ENCODE measurements at regions of chr14 and their contacts with region 1.

Region 1: DNA sequence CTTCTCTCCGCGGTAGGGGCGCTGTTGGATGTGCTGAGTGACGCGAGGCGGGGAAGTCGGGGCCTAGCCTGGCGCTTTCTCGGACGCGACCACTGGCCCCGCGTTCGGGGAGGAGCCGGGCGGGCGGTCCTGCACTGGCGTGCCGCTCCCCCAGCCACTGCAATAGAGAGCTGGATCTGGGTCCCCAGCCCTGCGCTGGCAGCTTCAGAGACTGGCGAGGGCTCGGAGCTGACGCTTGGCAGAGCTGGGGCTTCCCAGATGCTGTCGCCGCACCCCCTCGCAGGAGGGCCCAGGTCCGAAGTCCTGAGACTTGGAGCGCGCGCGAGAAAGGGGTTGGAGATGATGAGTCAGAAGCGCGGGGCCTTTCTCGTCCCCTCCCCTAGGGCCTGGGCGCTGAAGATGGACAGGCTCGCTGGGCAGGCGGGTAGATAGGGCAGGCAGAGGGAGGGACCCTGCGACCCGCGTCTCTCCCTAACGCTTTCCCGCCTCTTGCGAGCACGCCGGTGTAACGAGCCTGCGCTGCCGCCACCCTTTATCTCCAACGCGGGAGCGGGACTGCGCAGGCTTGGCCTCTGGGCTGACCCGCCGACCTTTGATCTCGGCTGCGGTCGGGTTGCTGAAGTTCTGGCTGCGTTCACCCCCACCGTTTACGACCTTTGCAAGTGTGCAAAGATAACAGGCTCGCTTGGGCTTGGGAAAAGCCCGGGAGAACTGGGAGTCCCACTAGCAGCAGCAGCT is 3.0 kb downstream of the TMEM253 start:
- DNase-seq: peak; percentile 98
- ATAC-seq: peak; percentile 90
- H3K4me3 Mint-ChIP-seq: peak overlapping the region; percentile 97
- H3K27ac Mint-ChIP-seq: peak overlapping the region; percentile 98
- H3K4me1 Mint-ChIP-seq: peaks cover 49% of the 10 kb centered on the region
- H3K27me3 Mint-ChIP-seq: peaks cover 11% of the 10 kb centered on the region

Region 2: DNA sequence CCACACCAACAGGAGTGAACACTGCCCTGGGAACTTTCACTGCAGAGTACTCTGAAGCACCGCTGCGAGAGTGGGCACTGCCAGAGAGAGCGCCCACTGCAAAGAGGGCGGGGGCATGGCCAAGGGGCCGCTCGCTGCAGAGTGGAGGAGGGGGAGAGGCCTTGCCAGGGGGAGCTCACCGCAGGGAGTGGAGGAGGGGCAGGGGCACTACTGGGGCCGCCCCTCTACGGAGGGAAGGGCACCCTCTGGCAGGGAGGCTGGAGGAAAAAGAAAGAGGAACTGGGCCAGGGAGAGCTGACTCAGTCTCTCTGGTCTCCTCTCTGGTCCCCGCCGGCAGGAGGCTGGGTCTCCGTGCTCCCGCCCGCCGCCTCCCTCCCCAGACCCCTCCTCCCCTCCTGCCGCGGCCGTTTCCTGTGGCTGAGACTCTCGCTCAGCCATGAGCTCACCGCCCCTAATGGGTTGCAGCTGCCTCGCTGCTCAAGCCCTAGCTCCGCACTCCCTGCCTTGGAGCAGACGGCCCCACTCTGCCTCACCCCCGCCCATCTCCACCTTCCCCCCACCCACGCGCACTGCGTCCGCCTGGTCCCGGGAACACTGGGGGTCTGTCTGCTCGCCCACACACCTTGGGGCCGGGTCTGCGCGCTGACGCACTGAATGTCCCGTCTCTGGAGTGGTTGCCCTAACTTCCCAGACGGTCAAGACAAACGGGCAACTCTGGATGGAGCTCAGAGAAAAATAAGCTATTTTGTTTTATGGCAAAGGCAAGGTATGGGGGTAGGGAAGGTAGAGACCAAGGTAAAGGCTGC is 32.5 kb before region 1 on chr14:
- CTCF ChIA-PET with region 1: interaction called, 109 read pairs
- DNase-seq: peak; percentile 71
- ATAC-seq: peak; percentile 57
- H3K4me3 Mint-ChIP-seq: peak overlapping the region; percentile 62
- H3K27ac Mint-ChIP-seq: no peak overlapping the region
- H3K4me1 Mint-ChIP-seq: peaks cover 31% of the 10 kb centered on the region
- H3K27me3 Mint-ChIP-seq: peaks cover 65% of the 10 kb centered on the region

Region 3: GRCh38 chr14:21092273-21093011 is 11.4 kb before region 1 on chr14:
- CTCF ChIA-PET with region 1: interaction called, 339 read pairs
- DNase-seq: peak; percentile 91
- ATAC-seq: peak; percentile 85
- H3K4me3 Mint-ChIP-seq: no peak overlapping the region
- H3K27ac Mint-ChIP-seq: no peak overlapping the region
- H3K4me1 Mint-ChIP-seq: peaks cover 20% of the 10 kb centered on the region
- H3K27me3 Mint-ChIP-seq: peaks cover 7% of the 10 kb centered on the region

Region 4: DNA sequence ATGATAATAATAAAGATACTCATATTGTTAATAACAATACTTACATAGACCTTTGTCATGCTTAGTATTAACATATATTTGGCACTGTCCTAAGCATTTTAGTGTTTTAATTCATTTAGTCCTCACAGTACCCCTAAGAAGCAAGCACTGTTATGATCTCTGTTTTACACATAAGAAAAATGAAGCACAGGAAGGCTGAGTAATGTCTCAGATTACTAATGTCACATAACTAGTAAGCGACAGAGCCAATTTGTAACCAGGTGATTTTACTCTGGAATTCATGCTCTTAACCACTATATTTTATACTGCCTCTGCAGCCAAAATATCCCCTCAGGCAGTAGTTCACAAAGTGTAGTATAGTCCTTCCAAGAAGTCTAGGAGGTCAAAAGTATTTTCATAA is 17.2 kb after region 1 on chr14:
- CTCF ChIA-PET with region 1: interaction called, 10 read pairs
- DNase-seq: no peak
- ATAC-seq: no peak
- H3K4me3 Mint-ChIP-seq: no peak overlapping the region
- H3K27ac Mint-ChIP-seq: no peak overlapping the region
- H3K4me1 Mint-ChIP-seq: peaks cover 11% of the 10 kb centered on the region
- H3K27me3 Mint-ChIP-seq: peaks cover 21% of the 10 kb centered on the region

Region 5: GRCh38 chr14:21136024-21136423 is 32.1 kb after region 1 on chr14:
- CTCF ChIA-PET with region 1: interaction called, 10 read pairs
- DNase-seq: no peak
- ATAC-seq: no peak
- H3K4me3 Mint-ChIP-seq: no peak overlapping the region
- H3K27ac Mint-ChIP-seq: no peak overlapping the region
- H3K4me1 Mint-ChIP-seq: no peaks in the 10 kb centered on the region
- H3K27me3 Mint-ChIP-seq: no peaks in the 10 kb centered on the region

Region 6: GRCh38 chr14:21191809-21192446 is 88.0 kb after region 1 on chr14:
- CTCF ChIA-PET with region 1: interaction called, 14 read pairs
- DNase-seq: peak; percentile 87
- ATAC-seq: peak; percentile 98
- H3K4me3 Mint-ChIP-seq: peak overlapping the region; percentile 56
- H3K27ac Mint-ChIP-seq: peak overlapping the region; percentile 46
- H3K4me1 Mint-ChIP-seq: peaks cover 11% of the 10 kb centered on the region
- H3K27me3 Mint-ChIP-seq: peaks cover 19% of the 10 kb centered on the region

Region 7: GRCh38 chr14:21203470-21204166 is 99.7 kb after region 1 on chr14:
- CTCF ChIA-PET with region 1: no interaction called
- DNase-seq: no peak
- ATAC-seq: no peak
- H3K4me3 Mint-ChIP-seq: no peak overlapping the region
- H3K27ac Mint-ChIP-seq: peak overlapping the region; percentile 38
- H3K4me1 Mint-ChIP-seq: no peaks in the 10 kb centered on the region
- H3K27me3 Mint-ChIP-seq: no peaks in the 10 kb centered on the region

Region 8: GRCh38 chr14:21233457-21234076 is 129.7 kb after region 1 on chr14:
- CTCF ChIA-PET with region 1: no interaction called
- DNase-seq: no peak
- ATAC-seq: peak; percentile 21
- H3K4me3 Mint-ChIP-seq: peak overlapping the region; percentile 51
- H3K27ac Mint-ChIP-seq: peak overlapping the region; percentile 75
- H3K4me1 Mint-ChIP-seq: peaks cover 86% of the 10 kb centered on the region
- H3K27me3 Mint-ChIP-seq: no peaks in the 10 kb centered on the region

Region 9: GRCh38 chr14:21768116-21768874 is 664.4 kb after region 1 on chr14:
- CTCF ChIA-PET with region 1: no interaction called
- DNase-seq: peak; percentile 54
- ATAC-seq: peak; percentile 93
- H3K4me3 Mint-ChIP-seq: peak overlapping the region; percentile 61
- H3K27ac Mint-ChIP-seq: peak overlapping the region; percentile 80
- H3K4me1 Mint-ChIP-seq: peaks cover 8% of the 10 kb centered on the region
- H3K27me3 Mint-ChIP-seq: peaks cover 21% of the 10 kb centered on the region